A673 (cell line): ENCODE measurements at regions of chr6 and their contacts with region 1.

Region 1: GRCh38 chr6:82525775-82526537 is 162.3 kb downstream of the TPBG start:
- DNase-seq: peak; percentile 90
- H3K4me3 ChIP-seq: no peak overlapping the region
- H3K27ac ChIP-seq: no peak overlapping the region
- H3K4me1 ChIP-seq: peaks cover 14% of the 10 kb centered on the region
- H3K27me3 ChIP-seq: peaks cover 20% of the 10 kb centered on the region
- CTCF ChIP-seq: no peak

Region 2: DNA sequence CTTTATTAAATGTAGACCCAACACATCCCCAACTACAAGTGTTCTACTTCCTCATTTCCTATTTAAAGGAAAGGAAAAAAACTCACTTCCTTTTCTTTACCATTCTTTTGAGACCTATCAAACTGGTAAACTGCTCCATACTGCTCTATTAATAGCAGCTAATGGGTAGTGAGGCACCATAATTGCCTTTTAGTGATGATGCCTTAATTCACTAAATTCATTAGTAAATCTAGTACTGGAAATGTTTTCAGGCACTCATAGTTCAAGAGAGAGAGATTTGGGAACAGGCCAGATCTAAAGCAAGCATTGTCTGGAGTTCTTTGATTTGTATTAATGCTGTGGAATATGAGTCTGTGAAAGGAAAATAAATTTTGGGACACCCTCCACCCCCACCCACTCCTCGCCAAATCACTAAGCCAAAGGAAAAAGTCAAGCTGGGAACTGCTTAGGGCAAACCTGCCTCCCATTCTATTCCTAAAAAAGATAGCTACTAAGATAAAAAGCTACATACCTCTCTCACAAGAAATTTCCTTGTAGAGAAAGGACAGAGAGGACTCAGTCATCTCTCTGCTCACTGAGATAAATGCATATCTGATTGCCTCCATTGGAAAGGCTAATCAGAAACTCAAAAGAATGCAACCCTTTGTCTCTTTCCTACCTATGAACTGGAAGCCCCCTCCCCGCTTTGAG is 264.8 kb before region 1 on chr6:
- CTCF ChIA-PET with region 1: no interaction called
- POLR2A ChIA-PET with region 1: no interaction called
- intact Hi-C with region 1: loop called (anchors 5 kb)
- DNase-seq: peak; percentile 52
- H3K4me3 ChIP-seq: no peak overlapping the region
- H3K27ac ChIP-seq: peak overlapping the region; percentile 6
- H3K4me1 ChIP-seq: peaks cover 27% of the 10 kb centered on the region
- H3K27me3 ChIP-seq: no peaks in the 10 kb centered on the region
- CTCF ChIP-seq: no peak

Region 3: GRCh38 chr6:82363351-82364086 is 162.4 kb before region 1 on chr6 and contains the start of gene TPBG:
- CTCF ChIA-PET with region 1: no interaction called
- POLR2A ChIA-PET with region 1: no interaction called
- intact Hi-C with region 1: loop called (anchors 5 kb)
- DNase-seq: peak; percentile 86
- H3K4me3 ChIP-seq: peak within 1 kb of the TSS; percentile 83
- H3K27ac ChIP-seq: peak within 1 kb of the TSS; percentile 95
- H3K4me1 ChIP-seq: peaks cover 40% of the 10 kb centered on the region
- H3K27me3 ChIP-seq: no peaks in the 10 kb centered on the region
- CTCF ChIP-seq: peak; percentile 51
- total RNA-seq, gene TPBG: 66.4 and 67.1 TPM in 2 replicates

Region 4: DNA sequence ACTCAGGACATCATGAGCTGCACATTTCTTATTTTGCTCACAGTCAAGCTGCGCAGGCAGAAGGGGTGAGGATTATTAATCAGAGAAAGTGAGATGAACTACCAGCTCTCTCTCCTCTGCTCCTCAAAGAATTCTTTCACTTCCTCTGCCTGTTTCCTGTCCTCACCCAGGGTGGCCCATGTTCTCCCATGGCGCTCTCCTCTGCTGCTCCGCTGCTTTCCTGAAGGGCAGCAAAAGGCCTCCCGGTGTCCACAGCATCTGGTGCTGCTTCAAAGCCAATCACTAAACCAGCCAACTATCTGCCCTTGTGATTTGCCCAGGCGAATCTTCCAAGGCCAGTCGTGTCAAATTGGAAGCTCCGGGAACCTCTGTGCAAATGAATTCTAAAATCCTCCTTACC is 161.9 kb after region 1 on chr6:
- CTCF ChIA-PET with region 1: no interaction called
- POLR2A ChIA-PET with region 1: no interaction called
- intact Hi-C with region 1: loop called (anchors 10 kb)
- DNase-seq: peak; percentile 98
- H3K4me3 ChIP-seq: peak overlapping the region; percentile 20
- H3K27ac ChIP-seq: peak overlapping the region; percentile 96
- H3K4me1 ChIP-seq: peaks cover 65% of the 10 kb centered on the region
- H3K27me3 ChIP-seq: no peaks in the 10 kb centered on the region
- CTCF ChIP-seq: no peak

Region 5: DNA sequence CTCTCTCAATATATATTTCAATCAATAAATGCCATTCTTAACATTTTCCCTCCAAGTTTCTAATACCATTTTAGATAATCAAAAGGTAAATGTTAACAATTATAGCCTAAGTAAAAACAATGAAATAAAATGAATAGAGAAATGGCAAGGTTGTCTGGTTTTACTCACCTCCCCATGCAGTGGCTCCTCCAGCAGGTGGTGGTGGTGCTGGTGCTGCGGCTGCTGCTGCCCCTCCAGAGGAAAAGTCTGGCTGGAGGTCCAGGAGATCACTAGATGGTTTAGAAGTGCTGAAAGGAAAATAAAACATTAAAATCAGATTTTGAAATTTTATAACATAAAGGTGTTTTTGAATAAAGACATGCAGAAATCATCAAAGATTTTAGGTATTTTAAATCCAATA is 1079.6 kb after region 1 on chr6:
- CTCF ChIA-PET with region 1: no interaction called
- POLR2A ChIA-PET with region 1: no interaction called
- intact Hi-C with region 1: no loop called
- DNase-seq: no peak
- H3K4me3 ChIP-seq: no peak overlapping the region
- H3K27ac ChIP-seq: no peak overlapping the region
- H3K4me1 ChIP-seq: no peaks in the 10 kb centered on the region
- H3K27me3 ChIP-seq: no peaks in the 10 kb centered on the region
- CTCF ChIP-seq: no peak